MCF 10A (cell line): ENCODE measurements at regions of chr21 and their contacts with region 1.

Region 1: GRCh38 chr21:41612674-41613532 is 104.9 kb upstream of the TMPRSS2 start:
- DNase-seq: peak; percentile 98
- H3K4me3 Mint-ChIP-seq: no peak overlapping the region
- H3K27ac Mint-ChIP-seq: peak overlapping the region; percentile 80
- H3K4me1 Mint-ChIP-seq: peaks cover 29% of the 10 kb centered on the region
- H3K27me3 Mint-ChIP-seq: no peaks in the 10 kb centered on the region
- CTCF ChIP-seq: peak; percentile 91

Region 2: DNA sequence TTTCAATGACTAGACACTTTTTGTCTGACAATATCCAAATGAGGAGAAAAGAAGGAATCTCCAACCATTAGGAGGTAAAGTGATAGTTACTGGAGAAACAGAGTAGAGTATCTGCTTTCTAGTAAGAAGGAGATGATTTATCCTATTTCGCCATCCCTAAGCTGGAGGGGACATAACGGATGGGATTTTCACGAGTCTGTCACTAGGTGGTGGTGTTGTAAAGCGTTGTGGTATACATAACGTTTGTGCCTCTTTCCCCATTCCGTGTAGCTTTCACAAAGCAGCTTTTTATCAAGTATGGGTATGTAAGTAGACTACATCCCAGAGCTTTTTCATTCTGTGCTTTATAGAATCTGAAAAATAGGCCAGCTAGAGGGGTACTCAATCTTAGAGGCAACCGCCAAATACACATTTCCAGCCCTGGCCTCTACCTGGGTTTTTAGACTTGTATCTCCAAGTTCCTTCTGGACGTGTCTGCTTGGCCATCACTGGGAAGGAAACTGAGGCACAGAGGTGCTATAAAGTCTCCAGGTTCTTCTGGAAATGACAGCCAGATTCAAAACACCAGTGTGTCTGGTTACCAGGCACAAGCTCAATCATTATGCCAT is 329.6 kb before region 1 on chr21:
- CTCF ChIA-PET with region 1: interaction called, 16 read pairs
- POLR2A ChIA-PET with region 1: interaction called, 5 read pairs
- intact Hi-C with region 1: loop called (anchors 1 kb)
- DNase-seq: peak; percentile 89
- H3K4me3 Mint-ChIP-seq: no peak overlapping the region
- H3K27ac Mint-ChIP-seq: no peak overlapping the region
- H3K4me1 Mint-ChIP-seq: no peaks in the 10 kb centered on the region
- H3K27me3 Mint-ChIP-seq: no peaks in the 10 kb centered on the region
- CTCF ChIP-seq: peak; percentile 82

Region 3: DNA sequence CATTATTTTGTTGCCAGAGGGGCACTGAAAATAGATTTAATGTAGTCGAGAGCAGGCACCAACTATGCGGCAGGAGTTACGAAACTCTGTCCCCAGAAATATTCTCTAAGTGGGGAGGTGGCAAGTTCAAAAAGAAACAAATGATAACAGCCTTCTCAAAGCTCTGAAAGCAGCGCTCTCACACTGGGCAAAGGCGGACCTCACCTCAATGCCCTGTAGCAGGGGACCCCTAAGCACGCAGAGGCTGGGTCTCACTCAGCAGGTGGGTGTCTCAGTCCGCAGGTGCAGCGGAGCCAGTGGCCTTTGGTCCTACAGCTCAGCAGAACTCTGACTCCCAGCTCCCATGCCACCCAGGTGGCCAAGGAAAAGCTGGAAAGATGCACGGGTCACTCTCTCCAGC is 83.1 kb before region 1 on chr21:
- CTCF ChIA-PET with region 1: no interaction called
- POLR2A ChIA-PET with region 1: no interaction called
- intact Hi-C with region 1: no loop called
- DNase-seq: no peak
- H3K4me3 Mint-ChIP-seq: no peak overlapping the region
- H3K27ac Mint-ChIP-seq: no peak overlapping the region
- H3K4me1 Mint-ChIP-seq: no peaks in the 10 kb centered on the region
- H3K27me3 Mint-ChIP-seq: peaks cover 32% of the 10 kb centered on the region
- CTCF ChIP-seq: no peak

Region 4: DNA sequence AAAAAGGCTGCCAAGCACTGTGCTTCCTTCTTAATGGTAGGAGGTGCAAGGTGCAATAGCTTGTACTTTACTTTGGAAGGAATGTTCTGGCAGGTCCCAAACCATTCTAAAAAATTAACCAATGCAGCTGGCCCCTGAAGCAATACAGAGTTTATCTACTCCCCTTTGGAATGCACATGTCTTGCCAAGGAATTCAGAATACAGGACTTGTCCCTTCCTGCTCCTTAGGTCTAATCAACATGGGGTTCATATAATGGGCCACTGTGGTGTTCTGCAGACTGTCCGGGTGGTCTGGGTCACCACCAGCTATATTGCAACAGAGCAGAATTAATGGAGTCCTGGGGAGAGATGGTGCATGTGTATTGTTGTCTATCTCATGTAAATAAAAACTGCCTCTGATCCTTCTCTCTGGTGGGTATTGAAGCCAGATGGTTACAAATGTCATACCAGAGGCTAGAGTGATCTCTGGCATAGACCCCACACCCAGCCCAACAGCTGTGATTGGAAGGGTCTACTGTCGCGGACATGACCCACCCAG is 41.1 kb after region 1 on chr21:
- CTCF ChIA-PET with region 1: interaction called, 14 read pairs
- POLR2A ChIA-PET with region 1: interaction called, 18 read pairs
- intact Hi-C with region 1: no loop called
- DNase-seq: peak; percentile 74
- H3K4me3 Mint-ChIP-seq: peak overlapping the region; percentile 39
- H3K27ac Mint-ChIP-seq: peak overlapping the region; percentile 64
- H3K4me1 Mint-ChIP-seq: peaks cover 37% of the 10 kb centered on the region
- H3K27me3 Mint-ChIP-seq: no peaks in the 10 kb centered on the region
- CTCF ChIP-seq: no peak

Region 5: GRCh38 chr21:41706678-41707077 is 93.8 kb after region 1 on chr21:
- CTCF ChIA-PET with region 1: no interaction called
- POLR2A ChIA-PET with region 1: interaction called, 12 read pairs
- intact Hi-C with region 1: no loop called
- DNase-seq: peak; percentile 58
- H3K4me3 Mint-ChIP-seq: no peak overlapping the region
- H3K27ac Mint-ChIP-seq: no peak overlapping the region
- H3K4me1 Mint-ChIP-seq: peaks cover 21% of the 10 kb centered on the region
- H3K27me3 Mint-ChIP-seq: no peaks in the 10 kb centered on the region
- CTCF ChIP-seq: no peak

Region 6: DNA sequence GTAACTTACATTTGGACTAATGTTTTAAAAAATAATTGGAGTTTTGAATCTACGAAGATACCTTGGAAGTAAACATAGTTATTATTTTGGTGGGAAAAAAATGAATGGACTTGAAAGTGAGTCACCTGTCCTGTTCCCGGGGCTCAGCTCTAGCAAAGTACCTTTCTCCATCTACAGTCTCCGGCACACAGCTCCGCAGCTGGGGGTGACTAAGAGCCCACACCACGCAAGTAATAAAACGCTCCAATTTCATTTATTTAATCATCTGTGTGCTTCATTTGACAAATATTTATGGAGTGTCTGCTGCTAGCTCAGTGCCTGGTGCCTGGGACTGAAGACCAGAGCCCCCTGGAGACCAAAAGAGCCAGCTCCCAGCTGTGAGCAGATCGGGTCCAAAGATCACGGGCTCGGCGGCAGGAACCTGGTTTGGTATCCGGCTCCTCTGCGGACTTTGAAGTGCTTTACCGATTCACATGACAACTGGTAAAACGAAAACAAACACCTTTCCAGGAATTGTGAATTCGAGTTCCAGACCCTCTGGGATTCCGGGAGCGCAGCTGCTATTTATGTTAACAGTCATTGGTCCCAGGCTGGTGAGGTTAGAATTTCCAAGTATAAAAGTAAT is 155.6 kb after region 1 on chr21:
- CTCF ChIA-PET with region 1: interaction called, 163 read pairs
- POLR2A ChIA-PET with region 1: interaction called, 238 read pairs
- intact Hi-C with region 1: loop called (anchors 1 kb)
- DNase-seq: peak; percentile 72
- H3K4me3 Mint-ChIP-seq: peak overlapping the region; percentile 87
- H3K27ac Mint-ChIP-seq: peak overlapping the region; percentile 87
- H3K4me1 Mint-ChIP-seq: peaks cover 25% of the 10 kb centered on the region
- H3K27me3 Mint-ChIP-seq: no peaks in the 10 kb centered on the region
- CTCF ChIP-seq: peak; percentile 28

Region 7: DNA sequence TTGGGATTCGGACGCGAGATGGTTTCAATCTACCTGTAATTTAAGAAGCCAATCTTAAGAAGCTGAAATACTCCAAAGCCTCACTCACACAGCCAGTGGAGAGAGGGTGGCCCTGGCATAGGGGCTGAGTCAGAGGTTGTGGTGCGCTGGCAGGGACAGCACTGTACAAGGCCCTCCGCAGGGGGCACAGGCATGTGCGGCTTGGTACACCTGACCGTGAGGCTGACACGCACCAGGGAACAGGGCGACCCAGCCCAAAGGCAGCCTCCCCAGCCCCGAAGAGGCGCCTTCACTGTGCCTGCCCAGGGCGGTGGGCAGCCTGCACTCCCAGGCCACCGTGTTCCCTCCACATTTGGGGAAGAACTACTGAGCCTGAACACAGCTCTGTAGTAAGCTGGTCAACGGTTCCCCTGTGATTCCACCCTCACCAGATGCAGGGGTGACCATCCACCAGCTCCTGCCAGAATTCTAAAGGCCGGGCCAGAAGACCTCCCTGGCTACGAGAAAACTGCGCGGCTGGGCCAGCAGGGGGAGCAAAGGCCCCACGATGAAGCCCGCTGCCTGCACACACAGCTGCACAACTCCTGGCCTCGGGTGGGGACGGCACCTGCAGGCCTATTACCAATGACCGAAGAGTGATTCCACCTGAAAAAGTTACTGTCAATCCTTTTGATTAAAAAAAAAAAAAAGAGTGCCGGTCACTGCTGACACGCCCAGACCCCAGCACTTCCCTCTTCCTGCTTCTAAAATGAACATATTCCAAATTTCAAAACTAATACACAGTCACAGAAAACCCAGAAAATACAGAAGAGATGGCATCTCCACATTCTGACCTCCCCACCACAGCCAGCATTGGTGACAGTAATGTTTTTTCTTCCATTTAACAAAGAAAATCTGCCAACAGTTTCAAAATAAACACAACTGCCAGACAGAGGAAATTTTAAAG is 203.6 kb after region 1 on chr21:
- CTCF ChIA-PET with region 1: interaction called, 78 read pairs
- POLR2A ChIA-PET with region 1: interaction called, 25 read pairs
- intact Hi-C with region 1: no loop called
- DNase-seq: peak; percentile 27
- H3K4me3 Mint-ChIP-seq: no peak overlapping the region
- H3K27ac Mint-ChIP-seq: peak overlapping the region; percentile 31
- H3K4me1 Mint-ChIP-seq: peaks cover 9% of the 10 kb centered on the region
- H3K27me3 Mint-ChIP-seq: no peaks in the 10 kb centered on the region
- CTCF ChIP-seq: peak; percentile 32

Region 8: GRCh38 chr21:42117229-42117966 is 504.5 kb after region 1 on chr21:
- CTCF ChIA-PET with region 1: interaction called, 27 read pairs
- POLR2A ChIA-PET with region 1: no interaction called
- intact Hi-C with region 1: loop called (anchors 1 kb)
- DNase-seq: peak; percentile 67
- H3K4me3 Mint-ChIP-seq: no peak overlapping the region
- H3K27ac Mint-ChIP-seq: no peak overlapping the region
- H3K4me1 Mint-ChIP-seq: peaks cover 40% of the 10 kb centered on the region
- H3K27me3 Mint-ChIP-seq: peaks cover 48% of the 10 kb centered on the region
- CTCF ChIP-seq: peak; percentile 85